CD14-positive monocyte (primary cell): ENCODE measurements at regions of chr19 and their contacts with region 1.

Region 1: GRCh38 chr19:47296036-47296435 is 13.6 kb upstream of the C5AR1 start:
- DNase-seq: peak; percentile 77 to 88 (median 84)
- H3K4me3 ChIP-seq: no peak overlapping the region
- H3K4me3 Mint-ChIP-seq: peak overlapping the region in 1 of 2 donors; percentile 37
- H3K27ac ChIP-seq: no peak overlapping the region
- H3K27ac Mint-ChIP-seq: peak overlapping the region in 2 of 7 donors; percentile 57 to 84
- H3K4me1 ChIP-seq: peaks cover 12 to 15% of the 10 kb centered on the region in 2 donors
- H3K4me1 Mint-ChIP-seq: peaks cover 19% of the 10 kb centered on the region
- H3K27me3 ChIP-seq: no peaks in the 10 kb centered on the region
- H3K27me3 Mint-ChIP-seq: peaks cover 6 to 19% (median 8%) of the 10 kb centered on the region in 3 donors
- CTCF ChIP-seq: peak; percentile 81

Region 2: GRCh38 chr19:47243776-47244547 is 52.1 kb before region 1 on chr19:
- intact Hi-C with region 1: no loop called
- DNase-seq: peak; percentile 95 to 98 (median 98)
- H3K4me3 ChIP-seq: peak overlapping the region in 1 of 3 experiments; percentile 43
- H3K4me3 Mint-ChIP-seq: peak overlapping the region; percentile 71 to 92
- H3K27ac ChIP-seq: peak overlapping the region; percentile 59 to 60
- H3K27ac Mint-ChIP-seq: peak overlapping the region in 5 of 7 donors; percentile 79 to 94 (median 91)
- H3K4me1 ChIP-seq: peaks cover 36 to 46% of the 10 kb centered on the region in 2 donors
- H3K4me1 Mint-ChIP-seq: peaks cover 30% of the 10 kb centered on the region
- H3K27me3 ChIP-seq: peaks cover 27 to 42% of the 10 kb centered on the region in 2 donors
- H3K27me3 Mint-ChIP-seq: peaks cover 12 to 29% (median 28%) of the 10 kb centered on the region in 3 donors
- CTCF ChIP-seq: peak; percentile 98

Region 3: DNA sequence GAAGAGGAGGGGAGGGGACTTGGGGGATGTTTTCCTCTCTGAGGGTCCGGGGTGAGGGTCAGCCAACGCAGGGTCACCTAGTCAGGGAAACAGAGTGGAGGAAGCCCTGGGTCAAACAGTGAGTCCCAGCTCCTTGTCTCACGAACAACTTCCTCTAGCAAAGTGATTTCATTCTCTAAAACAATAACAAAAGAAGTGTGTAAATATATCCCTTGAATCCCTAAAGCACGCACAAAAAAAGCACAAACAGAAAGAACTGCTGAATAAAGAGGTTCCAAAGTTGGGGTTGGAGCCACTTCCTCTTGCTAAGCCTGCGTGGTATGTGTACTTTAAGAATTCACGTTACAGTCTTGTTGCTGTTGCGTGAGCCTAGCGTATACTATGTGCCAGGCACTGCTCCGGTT is 34.4 kb after region 1 on chr19:
- intact Hi-C with region 1: loop called in 1 of 2 experiments (anchors 5 kb)
- DNase-seq: peak; percentile 71 to 84 (median 72)
- H3K4me3 ChIP-seq: peak overlapping the region in 1 of 3 experiments; percentile 60
- H3K4me3 Mint-ChIP-seq: peak overlapping the region; percentile 63 to 76
- H3K27ac ChIP-seq: peak overlapping the region; percentile 97 to 98
- H3K27ac Mint-ChIP-seq: peak overlapping the region; percentile 94 to 99 (median 96)
- H3K4me1 ChIP-seq: peaks cover 48 to 65% of the 10 kb centered on the region in 2 donors
- H3K4me1 Mint-ChIP-seq: peaks cover 61% of the 10 kb centered on the region
- H3K27me3 ChIP-seq: no peaks in the 10 kb centered on the region
- H3K27me3 Mint-ChIP-seq: peaks cover 2 to 8% (median 3%) of the 10 kb centered on the region in 3 donors
- CTCF ChIP-seq: no peak

Region 4: DNA sequence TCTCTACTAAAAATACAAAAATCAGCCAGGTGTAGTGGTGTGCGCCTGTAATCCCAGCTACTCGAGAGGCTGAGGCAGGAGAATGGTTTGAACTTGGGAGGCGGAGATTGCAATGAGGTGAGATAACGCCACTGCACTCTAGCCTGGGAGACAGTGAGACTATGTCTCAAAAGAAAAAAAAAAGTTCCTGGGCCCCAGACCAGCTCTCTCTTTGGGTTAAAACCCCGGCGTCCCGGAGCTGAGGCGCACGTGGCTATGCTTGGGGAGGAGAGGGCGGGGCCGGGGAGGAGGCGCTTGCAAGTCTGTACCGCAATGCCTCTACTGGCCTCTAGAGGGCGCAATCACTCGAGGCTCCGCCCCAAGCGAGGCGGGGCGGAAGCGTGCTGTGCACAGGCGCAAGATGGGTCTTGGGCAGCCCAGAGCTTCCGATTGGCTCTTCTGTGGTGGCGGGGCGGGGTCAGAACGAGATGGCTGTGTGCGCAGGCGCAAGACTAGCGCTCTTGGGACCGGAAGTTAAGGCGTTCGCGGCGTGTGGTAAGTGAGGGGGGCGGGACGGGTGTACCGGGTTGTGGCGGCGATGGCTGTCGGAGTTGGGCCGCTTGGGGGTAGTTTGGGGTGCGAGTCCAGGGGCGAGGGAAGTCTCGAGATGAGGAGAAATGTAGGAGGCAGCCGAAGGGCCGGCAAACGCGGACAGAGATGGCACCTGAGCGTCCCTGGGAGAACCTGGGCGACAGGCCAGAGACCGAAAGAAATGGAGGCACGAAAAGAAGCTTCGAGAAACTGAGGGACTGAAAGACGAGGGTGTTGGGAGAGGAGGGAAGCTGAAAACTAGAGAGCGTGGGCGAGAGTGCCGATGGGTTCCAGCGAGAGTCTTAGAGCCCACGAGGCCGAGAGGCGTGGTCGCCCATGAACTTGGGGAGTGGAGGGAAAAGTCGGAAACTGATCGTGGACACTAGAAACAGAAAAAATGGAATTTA is 53.1 kb after region 1 on chr19 and contains the start of gene DHX34:
- intact Hi-C with region 1: loop called in 1 of 2 experiments (anchors 5 kb)
- DNase-seq: peak; percentile 99
- H3K4me3 ChIP-seq: peak within 1 kb of the TSS; percentile 61 to 97 (median 85)
- H3K4me3 Mint-ChIP-seq: peak within 1 kb of the TSS; percentile 97
- H3K27ac ChIP-seq: peak within 1 kb of the TSS; percentile 83 to 98
- H3K27ac Mint-ChIP-seq: peak within 1 kb of the TSS; percentile 96 to 100 (median 99)
- H3K4me1 ChIP-seq: peaks cover 40 to 54% of the 10 kb centered on the region in 2 donors
- H3K4me1 Mint-ChIP-seq: peaks cover 47% of the 10 kb centered on the region
- H3K27me3 ChIP-seq: no peaks in the 10 kb centered on the region
- H3K27me3 Mint-ChIP-seq: peaks cover 0 to 3% (median 0%) of the 10 kb centered on the region in 3 donors
- CTCF ChIP-seq: peak; percentile 91
- polyA plus RNA-seq, gene DHX34: 3.4 to 34.4 (median 3.8) TPM